ENCODE measurements at regions of chr10 and their contacts with region 1.

Region 1: GRCh38 chr10:26627324-26627723 is 70.2 kb upstream of the PDSS1 start:
- H3K4me3 Mint-ChIP-seq: no peak overlapping the region
- H3K27ac Mint-ChIP-seq: peak overlapping the region; percentile 83
- H3K4me1 Mint-ChIP-seq: peaks cover 38% of the 10 kb centered on the region
- H3K27me3 Mint-ChIP-seq: no peaks in the 10 kb centered on the region

Region 2: GRCh38 chr10:26516540-26517101 is 110.7 kb before region 1 on chr10:
- intact Hi-C with region 1: no loop called
- H3K4me3 Mint-ChIP-seq: no peak overlapping the region
- H3K27ac Mint-ChIP-seq: peak overlapping the region; percentile 56
- H3K4me1 Mint-ChIP-seq: peaks cover 36% of the 10 kb centered on the region
- H3K27me3 Mint-ChIP-seq: no peaks in the 10 kb centered on the region

Region 3: GRCh38 chr10:26642896-26643653 is 15.8 kb after region 1 on chr10:
- intact Hi-C with region 1: no loop called
- H3K4me3 Mint-ChIP-seq: no peak overlapping the region
- H3K27ac Mint-ChIP-seq: no peak overlapping the region
- H3K4me1 Mint-ChIP-seq: peaks cover 15% of the 10 kb centered on the region
- H3K27me3 Mint-ChIP-seq: no peaks in the 10 kb centered on the region

Region 4: GRCh38 chr10:27319752-27320561 is 692.6 kb after region 1 on chr10:
- intact Hi-C with region 1: loop called (anchors 5 kb)
- H3K4me3 Mint-ChIP-seq: peak overlapping the region; percentile 69
- H3K27ac Mint-ChIP-seq: peak overlapping the region; percentile 89
- H3K4me1 Mint-ChIP-seq: peaks cover 5% of the 10 kb centered on the region
- H3K27me3 Mint-ChIP-seq: no peaks in the 10 kb centered on the region

Measured in dendritic cell treated with granulocyte-macrophage colony-stimulating factor and Interleukin-4, amounts not matched to agents 40 ng/mL and 50 ng/mL, for 4 days (primary cell).